Activated CD4-positive, alpha-beta memory T cell treated with anti-CD3 and anti-CD28 coated beads for 36 hours (primary cell): ENCODE measurements at regions of chr14 and their contacts with region 1.

Region 1: GRCh38 chr14:68137704-68138619 is 318.4 kb downstream of the RAD51B start:
- DNase-seq: peak; percentile 21
- H3K4me3 Mint-ChIP-seq: no peak overlapping the region
- H3K27ac Mint-ChIP-seq: no peak overlapping the region
- H3K4me1 Mint-ChIP-seq: peaks cover 6% of the 10 kb centered on the region
- H3K27me3 Mint-ChIP-seq: no peaks in the 10 kb centered on the region

Region 2: DNA sequence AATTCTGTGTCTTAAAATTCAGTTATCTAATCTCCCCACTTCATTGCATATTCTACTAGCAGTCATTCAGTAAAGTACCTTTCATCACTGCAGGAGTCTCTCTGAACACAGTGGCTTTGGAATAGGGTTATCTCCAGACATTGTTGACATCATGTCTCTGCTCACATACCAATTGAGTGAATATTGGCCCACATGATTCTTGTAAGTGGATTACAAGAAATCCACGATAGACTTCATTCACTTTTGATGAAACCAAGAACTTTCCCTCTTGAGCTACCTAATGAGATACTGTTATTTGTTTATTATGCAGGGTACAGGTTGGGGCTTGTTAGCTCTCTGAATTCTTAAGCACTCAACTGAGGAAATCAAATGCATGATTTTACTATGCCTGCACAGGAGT is 33.4 kb before region 1 on chr14:
- CTCF ChIA-PET with region 1: no interaction called
- POLR2A ChIA-PET with region 1: no interaction called
- intact Hi-C with region 1: no loop called
- DNase-seq: no peak
- H3K4me3 Mint-ChIP-seq: no peak overlapping the region
- H3K27ac Mint-ChIP-seq: no peak overlapping the region
- H3K4me1 Mint-ChIP-seq: peaks cover 5% of the 10 kb centered on the region
- H3K27me3 Mint-ChIP-seq: no peaks in the 10 kb centered on the region

Region 3: DNA sequence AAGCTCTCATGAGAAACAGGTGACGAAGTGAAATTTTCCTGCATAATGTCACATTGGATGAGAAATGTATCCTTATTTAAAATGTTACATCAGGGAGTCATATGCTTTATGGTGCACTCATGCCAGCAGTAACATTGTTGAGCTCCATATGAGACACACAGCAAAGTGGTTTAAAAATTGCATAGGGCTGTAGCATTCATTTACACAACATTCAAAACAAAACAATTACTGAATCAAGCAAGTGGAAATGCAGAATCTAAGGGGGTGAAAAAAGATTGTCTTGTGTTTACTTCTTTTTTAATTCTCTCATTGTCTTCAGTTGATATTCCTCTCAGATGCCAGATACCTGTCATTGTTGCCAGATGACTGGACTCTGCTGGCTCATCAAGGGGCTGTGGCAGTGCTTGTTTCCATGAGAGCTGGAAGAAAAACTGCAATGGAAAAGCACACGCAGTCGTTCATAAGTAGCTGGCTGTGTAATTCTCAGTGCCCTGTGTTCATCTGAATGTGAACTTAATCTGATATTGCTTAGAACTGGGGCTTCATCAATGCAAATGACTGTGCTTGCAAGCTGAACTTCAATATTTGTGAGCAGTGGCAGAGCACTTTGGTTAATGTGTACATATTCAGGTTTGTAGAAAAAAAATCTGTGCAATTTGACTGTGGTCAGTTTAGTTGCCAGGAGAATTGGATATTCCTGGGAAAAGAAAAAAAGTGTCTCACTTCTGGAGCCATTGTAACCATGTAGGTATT is 12.8 kb before region 1 on chr14:
- CTCF ChIA-PET with region 1: no interaction called
- POLR2A ChIA-PET with region 1: no interaction called
- intact Hi-C with region 1: no loop called
- DNase-seq: peak; percentile 21
- H3K4me3 Mint-ChIP-seq: no peak overlapping the region
- H3K27ac Mint-ChIP-seq: no peak overlapping the region
- H3K4me1 Mint-ChIP-seq: peaks cover 12% of the 10 kb centered on the region
- H3K27me3 Mint-ChIP-seq: no peaks in the 10 kb centered on the region

Region 4: GRCh38 chr14:68164711-68165113 is 26.8 kb after region 1 on chr14:
- CTCF ChIA-PET with region 1: no interaction called
- POLR2A ChIA-PET with region 1: no interaction called
- intact Hi-C with region 1: no loop called
- DNase-seq: no peak
- H3K4me3 Mint-ChIP-seq: no peak overlapping the region
- H3K27ac Mint-ChIP-seq: no peak overlapping the region
- H3K4me1 Mint-ChIP-seq: no peaks in the 10 kb centered on the region
- H3K27me3 Mint-ChIP-seq: no peaks in the 10 kb centered on the region

Region 5: DNA sequence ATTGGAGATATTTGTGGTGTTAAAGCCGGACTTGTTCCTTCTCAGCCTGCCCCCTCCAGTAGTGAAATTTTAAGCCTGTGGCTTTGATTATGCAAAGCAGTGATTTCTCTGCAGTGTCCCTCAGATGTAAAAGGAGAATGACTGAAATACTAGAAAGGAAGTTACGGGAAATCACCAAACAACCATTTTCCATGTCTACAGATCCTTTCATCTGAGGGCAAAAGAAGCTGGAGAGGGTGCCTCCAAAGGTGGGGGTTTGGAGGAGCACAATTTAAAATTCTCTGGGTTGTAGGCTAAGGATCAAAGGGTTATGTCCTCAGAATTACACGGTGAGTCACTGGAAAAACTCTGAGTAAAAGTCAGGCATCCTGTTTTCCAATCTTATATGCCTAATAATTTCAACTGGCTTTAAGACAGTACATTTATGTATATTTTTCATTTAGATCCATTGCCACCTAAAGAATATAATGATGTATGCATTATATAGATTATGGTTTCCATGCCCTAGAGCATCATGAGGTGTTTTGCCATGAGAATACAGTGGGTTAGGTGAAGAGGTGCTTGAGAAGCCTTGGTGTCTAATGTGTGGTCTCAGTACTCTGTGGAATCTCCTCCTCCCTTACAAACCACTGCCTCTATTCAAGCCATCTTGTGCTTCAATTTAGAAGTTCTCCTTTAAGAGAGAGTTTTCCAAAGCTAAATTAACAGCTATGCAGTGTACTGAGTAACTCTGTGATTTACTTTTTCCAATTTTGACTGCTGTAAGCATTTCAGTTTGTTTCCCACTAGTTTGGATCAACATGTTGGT is 43.8 kb after region 1 on chr14:
- CTCF ChIA-PET with region 1: no interaction called
- POLR2A ChIA-PET with region 1: no interaction called
- intact Hi-C with region 1: loop called (anchors 1 kb)
- DNase-seq: no peak
- H3K4me3 Mint-ChIP-seq: no peak overlapping the region
- H3K27ac Mint-ChIP-seq: no peak overlapping the region
- H3K4me1 Mint-ChIP-seq: peaks cover 27% of the 10 kb centered on the region
- H3K27me3 Mint-ChIP-seq: no peaks in the 10 kb centered on the region

Region 6: GRCh38 chr14:68333262-68333661 is 195.3 kb after region 1 on chr14:
- CTCF ChIA-PET with region 1: no interaction called
- POLR2A ChIA-PET with region 1: no interaction called
- intact Hi-C with region 1: no loop called
- DNase-seq: no peak
- H3K4me3 Mint-ChIP-seq: no peak overlapping the region
- H3K27ac Mint-ChIP-seq: no peak overlapping the region
- H3K4me1 Mint-ChIP-seq: peaks cover 2% of the 10 kb centered on the region
- H3K27me3 Mint-ChIP-seq: no peaks in the 10 kb centered on the region